ENCODE measurements at regions of chr13 and their contacts with region 1.

Region 1: DNA sequence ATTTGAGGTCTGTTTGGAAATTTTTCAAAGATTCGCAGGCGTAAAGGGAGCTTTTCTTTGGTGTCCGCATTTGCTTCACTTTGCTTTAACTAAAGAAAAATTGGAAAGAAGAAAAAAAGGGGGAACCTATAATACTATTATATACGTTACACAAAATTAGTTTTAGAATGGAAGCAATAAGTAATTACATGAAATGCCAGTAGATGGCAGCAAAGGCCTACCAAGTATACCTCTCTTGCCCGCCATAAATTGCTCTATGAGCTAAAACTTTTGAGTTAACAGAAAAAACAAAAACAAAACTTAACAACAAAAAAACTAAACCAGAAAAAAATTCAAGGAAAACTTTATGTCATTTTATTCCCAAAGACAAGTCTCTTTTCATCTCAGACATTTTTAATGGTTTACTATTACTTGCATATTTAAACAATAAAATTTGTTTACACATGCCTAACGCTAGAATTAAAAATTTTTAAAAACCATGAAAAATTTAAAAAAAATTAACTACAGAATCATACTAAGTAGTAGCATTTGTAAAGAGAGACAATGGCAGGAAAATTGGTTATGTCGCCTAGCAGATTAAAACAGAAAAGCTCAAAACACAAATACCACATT is 271.4 kb downstream of the NALCN start:
- DNase-seq: no peak
- ATAC-seq: peak in 1 of 4 donors; percentile 53
- H3K4me3 ChIP-seq: no peak overlapping the region
- H3K27ac ChIP-seq: no peak overlapping the region
- H3K4me1 ChIP-seq: no peaks in the 10 kb centered on the region
- H3K27me3 ChIP-seq: no peaks in the 10 kb centered on the region
- CTCF ChIP-seq: peak; percentile 65

Region 2: GRCh38 chr13:101242720-101243119 is 97.8 kb after region 1 on chr13:
- intact Hi-C with region 1: no loop called
- DNase-seq: no peak
- ATAC-seq: no peak
- H3K4me3 ChIP-seq: no peak overlapping the region
- H3K27ac ChIP-seq: no peak overlapping the region
- H3K4me1 ChIP-seq: no peaks in the 10 kb centered on the region
- H3K27me3 ChIP-seq: no peaks in the 10 kb centered on the region
- CTCF ChIP-seq: no peak

Region 3: GRCh38 chr13:101474419-101474957 is 329.6 kb after region 1 on chr13:
- intact Hi-C with region 1: loop called in 1 of 2 experiments (anchors 10 kb)
- DNase-seq: no peak
- ATAC-seq: no peak
- H3K4me3 ChIP-seq: no peak overlapping the region
- H3K27ac ChIP-seq: no peak overlapping the region
- H3K4me1 ChIP-seq: no peaks in the 10 kb centered on the region
- H3K27me3 ChIP-seq: no peaks in the 10 kb centered on the region
- CTCF ChIP-seq: no peak

Region 4: GRCh38 chr13:102460801-102461200 is 1315.9 kb after region 1 on chr13:
- intact Hi-C with region 1: loop called in 1 of 2 experiments (anchors 5 kb)
- DNase-seq: no peak
- ATAC-seq: no peak
- H3K4me3 ChIP-seq: no peak overlapping the region
- H3K27ac ChIP-seq: no peak overlapping the region
- H3K4me1 ChIP-seq: no peaks in the 10 kb centered on the region
- H3K27me3 ChIP-seq: no peaks in the 10 kb centered on the region
- CTCF ChIP-seq: no peak

Region 5: GRCh38 chr13:102555917-102556553 is 1411.1 kb after region 1 on chr13:
- intact Hi-C with region 1: loop called in 1 of 2 experiments (anchors 10 kb)
- DNase-seq: no peak
- ATAC-seq: peak in 2 of 4 donors; percentile 43 to 67
- H3K4me3 ChIP-seq: no peak overlapping the region
- H3K27ac ChIP-seq: no peak overlapping the region
- H3K4me1 ChIP-seq: peaks cover 4% of the 10 kb centered on the region
- H3K27me3 ChIP-seq: no peaks in the 10 kb centered on the region
- CTCF ChIP-seq: peak; percentile 43